ENCODE measurements at regions of chr13 and their contacts with region 1.

Region 1: GRCh38 chr13:43905435-43906031 is 25.8 kb downstream of the LACC1 start:
- DNase-seq: no peak
- ATAC-seq: peak; percentile 77
- H3K4me3 Mint-ChIP-seq: no peak overlapping the region
- H3K27ac Mint-ChIP-seq: no peak overlapping the region
- H3K4me1 Mint-ChIP-seq: no peaks in the 10 kb centered on the region
- H3K27me3 Mint-ChIP-seq: peaks cover 14% of the 10 kb centered on the region
- CTCF ChIP-seq: peak; percentile 72

Region 2: GRCh38 chr13:43933378-43933777 is 27.8 kb after region 1 on chr13:
- CTCF ChIA-PET with region 1: interaction called, 6 read pairs
- POLR2A ChIA-PET with region 1: no interaction called
- intact Hi-C with region 1: loop called (anchors 2 kb)
- DNase-seq: no peak
- ATAC-seq: peak; percentile 98
- H3K4me3 Mint-ChIP-seq: no peak overlapping the region
- H3K27ac Mint-ChIP-seq: no peak overlapping the region
- H3K4me1 Mint-ChIP-seq: peaks cover 14% of the 10 kb centered on the region
- H3K27me3 Mint-ChIP-seq: peaks cover 16% of the 10 kb centered on the region
- CTCF ChIP-seq: no peak

Region 3: GRCh38 chr13:44050450-44051063 is 145.0 kb after region 1 on chr13:
- CTCF ChIA-PET with region 1: interaction called, 9 read pairs
- POLR2A ChIA-PET with region 1: no interaction called
- intact Hi-C with region 1: loop called (anchors 1 kb)
- DNase-seq: no peak
- ATAC-seq: no peak
- H3K4me3 Mint-ChIP-seq: no peak overlapping the region
- H3K27ac Mint-ChIP-seq: no peak overlapping the region
- H3K4me1 Mint-ChIP-seq: no peaks in the 10 kb centered on the region
- H3K27me3 Mint-ChIP-seq: peaks cover 33% of the 10 kb centered on the region
- CTCF ChIP-seq: no peak

Region 4: GRCh38 chr13:44243198-44243857 is 337.8 kb after region 1 on chr13:
- CTCF ChIA-PET with region 1: no interaction called
- POLR2A ChIA-PET with region 1: no interaction called
- intact Hi-C with region 1: loop called (anchors 5 kb)
- DNase-seq: no peak
- ATAC-seq: peak; percentile 72
- H3K4me3 Mint-ChIP-seq: no peak overlapping the region
- H3K27ac Mint-ChIP-seq: no peak overlapping the region
- H3K4me1 Mint-ChIP-seq: peaks cover 5% of the 10 kb centered on the region
- H3K27me3 Mint-ChIP-seq: peaks cover 1% of the 10 kb centered on the region
- CTCF ChIP-seq: no peak

Region 5: DNA sequence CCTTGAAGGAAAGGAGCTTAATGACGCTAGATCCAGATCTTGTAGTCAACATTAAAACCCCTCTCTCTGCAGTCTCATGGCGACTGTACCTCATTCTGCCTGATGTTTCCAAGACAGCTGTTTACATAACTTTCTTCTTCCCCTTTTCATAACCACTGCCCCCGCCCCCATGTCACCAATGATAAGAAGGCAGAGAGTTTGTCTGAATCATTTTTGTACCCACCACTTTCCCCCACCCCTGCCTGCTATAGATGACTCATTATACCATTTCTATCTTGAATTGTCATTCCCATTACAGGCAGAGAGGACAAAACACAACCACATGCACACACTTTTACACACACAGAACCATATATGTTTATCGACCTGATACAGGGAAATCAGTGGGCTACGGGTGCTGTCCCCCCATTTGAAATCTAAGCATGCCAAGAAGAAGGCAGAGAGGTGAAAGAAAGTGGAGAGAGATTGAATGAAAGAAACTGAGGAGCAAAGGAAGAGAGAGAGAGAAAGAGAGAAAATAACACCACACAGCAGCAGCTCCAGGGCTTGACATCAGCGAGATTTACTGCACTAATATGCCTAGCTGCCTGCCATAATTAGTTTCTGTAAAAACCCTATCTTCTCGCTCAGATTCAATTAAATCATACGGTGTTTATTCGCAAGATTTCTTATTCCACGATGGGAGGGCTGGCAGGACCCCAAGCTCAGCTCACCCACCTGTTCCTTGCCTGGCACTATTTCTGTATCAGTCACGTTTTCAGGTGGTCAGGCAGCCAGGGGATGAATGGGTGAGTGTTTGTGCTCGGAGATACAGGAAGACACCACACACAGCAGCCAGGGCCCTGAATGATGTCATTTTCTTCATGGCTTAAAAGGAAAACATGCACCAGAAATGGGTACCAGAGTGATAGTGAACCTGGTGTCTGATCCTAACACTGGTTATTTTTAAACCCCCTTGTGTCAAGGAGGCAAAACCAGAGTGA is 353.8 kb after region 1 on chr13:
- CTCF ChIA-PET with region 1: no interaction called
- POLR2A ChIA-PET with region 1: no interaction called
- intact Hi-C with region 1: no loop called
- DNase-seq: peak; percentile 36
- ATAC-seq: peak; percentile 92
- H3K4me3 Mint-ChIP-seq: peak overlapping the region; percentile 74
- H3K27ac Mint-ChIP-seq: peak overlapping the region; percentile 80
- H3K4me1 Mint-ChIP-seq: peaks cover 19% of the 10 kb centered on the region
- H3K27me3 Mint-ChIP-seq: no peaks in the 10 kb centered on the region
- CTCF ChIP-seq: no peak

Region 6: DNA sequence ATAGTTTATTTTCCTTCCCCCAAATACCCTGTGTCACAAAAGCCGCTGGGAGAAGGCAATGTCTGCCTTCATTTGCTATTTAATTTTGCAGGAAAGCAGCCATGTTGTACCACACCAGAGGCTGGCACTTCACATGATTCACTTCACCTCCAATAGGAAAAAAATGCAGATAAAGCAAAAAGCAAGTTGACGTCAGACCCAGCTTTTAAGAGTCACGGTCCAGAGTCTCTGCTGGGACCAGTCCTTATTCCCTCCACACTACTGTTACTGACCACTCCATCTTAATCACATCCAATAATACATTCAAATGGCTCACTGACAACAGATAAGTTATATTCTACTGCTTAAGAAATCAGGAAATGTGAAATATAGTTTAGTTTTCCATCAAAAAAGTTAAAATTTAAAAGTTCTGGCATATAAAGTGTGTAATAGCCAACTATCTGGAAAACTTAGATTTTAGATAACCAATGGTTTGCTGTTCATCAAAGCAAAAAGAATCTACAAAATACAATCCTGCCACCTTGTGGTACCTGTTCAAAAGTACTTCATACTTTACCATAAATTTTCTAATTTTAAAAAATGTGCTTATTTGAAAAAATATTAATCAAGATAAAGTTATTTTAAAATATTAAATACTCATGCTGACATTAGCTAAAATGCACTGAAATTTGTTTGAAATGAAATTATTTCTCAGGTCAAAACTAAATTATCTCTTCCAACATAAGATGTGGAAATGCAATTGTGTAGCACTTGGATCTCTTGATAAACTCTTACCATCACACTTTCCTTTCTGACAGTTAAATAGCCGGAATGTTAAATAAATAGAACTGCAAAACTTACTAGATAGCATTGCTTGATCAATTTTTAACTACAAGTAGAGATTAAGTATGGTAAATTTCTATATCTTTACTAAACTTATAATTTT is 565.4 kb after region 1 on chr13:
- CTCF ChIA-PET with region 1: interaction called, 58 read pairs
- POLR2A ChIA-PET with region 1: no interaction called
- intact Hi-C with region 1: loop called (anchors 1 kb)
- DNase-seq: no peak
- ATAC-seq: no peak
- H3K4me3 Mint-ChIP-seq: no peak overlapping the region
- H3K27ac Mint-ChIP-seq: no peak overlapping the region
- H3K4me1 Mint-ChIP-seq: no peaks in the 10 kb centered on the region
- H3K27me3 Mint-ChIP-seq: no peaks in the 10 kb centered on the region
- CTCF ChIP-seq: peak; percentile 87

Region 7: GRCh38 chr13:45310341-45311125 is 1405.0 kb after region 1 on chr13:
- CTCF ChIA-PET with region 1: no interaction called
- POLR2A ChIA-PET with region 1: no interaction called
- intact Hi-C with region 1: loop called (anchors 2 kb)
- DNase-seq: no peak
- ATAC-seq: no peak
- H3K4me3 Mint-ChIP-seq: peak overlapping the region; percentile 83
- H3K27ac Mint-ChIP-seq: no peak overlapping the region
- H3K4me1 Mint-ChIP-seq: peaks cover 18% of the 10 kb centered on the region
- H3K27me3 Mint-ChIP-seq: peaks cover 7% of the 10 kb centered on the region
- CTCF ChIP-seq: no peak